ENCODE measurements at regions of chr10 and their contacts with region 1.

Region 1: DNA sequence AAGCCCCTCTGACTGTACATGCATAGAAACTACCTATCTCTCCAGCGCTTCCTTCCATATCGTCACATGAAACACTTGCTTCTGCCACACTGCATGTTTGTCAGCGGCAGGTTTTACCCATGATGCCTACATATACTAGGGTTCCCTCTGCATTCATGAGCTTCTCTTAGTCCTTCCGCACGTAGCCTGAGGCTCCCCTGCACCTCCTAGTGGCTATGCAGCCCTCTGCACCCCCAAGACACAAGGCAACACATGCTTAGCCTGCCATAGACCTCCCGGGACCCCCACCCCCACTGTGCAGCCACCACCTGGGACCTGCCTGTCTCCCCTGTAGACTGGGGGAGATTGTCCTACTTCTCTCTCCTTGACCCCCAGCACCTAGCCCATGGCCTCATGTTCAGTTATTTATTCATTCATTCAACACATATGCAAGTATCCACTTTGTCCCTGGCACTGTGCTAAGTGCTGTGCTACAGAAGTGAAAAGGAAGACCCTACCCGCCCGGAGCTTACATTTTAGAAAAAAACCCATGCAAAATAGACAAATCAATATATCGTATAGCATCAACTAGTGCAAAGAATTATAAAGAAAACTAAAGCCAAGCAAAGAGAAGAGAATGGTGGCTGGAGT is 23.5 kb downstream of the TMEM273 start:
- DNase-seq: no peak
- H3K4me3 ChIP-seq: no peak overlapping the region
- H3K27ac ChIP-seq: no peak overlapping the region
- H3K4me1 ChIP-seq: no peaks in the 10 kb centered on the region
- H3K27me3 ChIP-seq: no peaks in the 10 kb centered on the region
- CTCF ChIP-seq: peak; percentile 48 to 53 (median 50)
- EP300 ChIP-seq: no peak
- POLR2A ChIP-seq: no peak

Region 2: DNA sequence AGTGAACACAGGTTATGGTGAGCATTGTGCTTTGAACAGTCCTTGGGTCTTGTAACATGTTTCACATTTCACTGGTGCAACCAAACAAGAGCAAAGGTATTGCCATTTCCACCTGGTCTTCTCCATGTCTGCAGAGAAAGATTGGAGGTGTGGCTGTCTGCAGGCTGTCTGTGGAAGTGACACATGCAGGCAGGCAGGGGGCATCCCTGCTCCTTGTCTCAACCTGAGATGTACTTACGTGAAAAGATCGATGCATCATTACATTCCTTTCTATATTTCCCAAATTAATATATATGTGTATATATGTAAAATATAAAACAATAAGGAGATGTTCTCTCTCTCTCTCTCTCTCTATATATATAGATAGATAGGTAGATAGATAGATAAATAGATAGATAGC is 279.3 kb before region 1 on chr10:
- in situ Hi-C with region 1: loop called in 1 of 4 experiments (anchors 25 kb)
- intact Hi-C with region 1: no loop called
- DNase-seq: no peak
- H3K4me3 ChIP-seq: no peak overlapping the region
- H3K27ac ChIP-seq: no peak overlapping the region
- H3K4me1 ChIP-seq: no peaks in the 10 kb centered on the region
- H3K27me3 ChIP-seq: no peaks in the 10 kb centered on the region
- CTCF ChIP-seq: peak in 4 of 5 experiments; percentile 26 to 36 (median 29)
- EP300 ChIP-seq: no peak
- POLR2A ChIP-seq: no peak

Region 3: GRCh38 chr10:48981310-48981907 is 183.3 kb before region 1 on chr10:
- in situ Hi-C with region 1: no loop called
- intact Hi-C with region 1: loop called (anchors 5 kb)
- DNase-seq: peak; percentile 51
- H3K4me3 ChIP-seq: no peak overlapping the region
- H3K27ac ChIP-seq: no peak overlapping the region
- H3K4me1 ChIP-seq: no peaks in the 10 kb centered on the region
- H3K27me3 ChIP-seq: no peaks in the 10 kb centered on the region
- CTCF ChIP-seq: peak; percentile 57 to 77 (median 69)
- EP300 ChIP-seq: no peak
- POLR2A ChIP-seq: no peak

Region 4: DNA sequence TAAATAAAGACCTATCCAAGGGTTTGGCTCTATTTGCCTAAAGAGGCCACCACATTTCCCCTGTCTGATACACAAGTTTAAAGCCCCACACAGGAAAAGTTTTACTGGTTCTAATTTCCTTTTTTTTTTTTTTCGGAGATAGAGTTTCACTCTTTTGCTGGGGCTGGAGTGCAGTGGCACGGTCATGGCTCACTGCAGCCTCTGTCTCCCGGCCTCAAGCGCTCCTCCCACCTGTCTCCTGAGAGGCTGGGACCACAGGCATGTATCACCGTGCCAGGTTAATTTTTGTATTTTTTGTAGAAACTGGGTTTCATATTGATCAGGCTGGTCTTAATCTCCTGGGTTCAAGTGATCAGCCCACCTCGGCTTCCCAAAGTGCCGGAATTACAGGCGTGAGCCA is 1140.0 kb after region 1 on chr10:
- in situ Hi-C with region 1: no loop called
- intact Hi-C with region 1: loop called (anchors 5 kb)
- DNase-seq: no peak
- H3K4me3 ChIP-seq: no peak overlapping the region
- H3K27ac ChIP-seq: no peak overlapping the region
- H3K4me1 ChIP-seq: no peaks in the 10 kb centered on the region
- H3K27me3 ChIP-seq: no peaks in the 10 kb centered on the region
- CTCF ChIP-seq: no peak
- EP300 ChIP-seq: no peak
- POLR2A ChIP-seq: no peak

Measured in transverse colon (tissue), 4 donors.